GM12878 (cell line): ENCODE measurements at regions of chr1 and their contacts with region 1.

Region 1: DNA sequence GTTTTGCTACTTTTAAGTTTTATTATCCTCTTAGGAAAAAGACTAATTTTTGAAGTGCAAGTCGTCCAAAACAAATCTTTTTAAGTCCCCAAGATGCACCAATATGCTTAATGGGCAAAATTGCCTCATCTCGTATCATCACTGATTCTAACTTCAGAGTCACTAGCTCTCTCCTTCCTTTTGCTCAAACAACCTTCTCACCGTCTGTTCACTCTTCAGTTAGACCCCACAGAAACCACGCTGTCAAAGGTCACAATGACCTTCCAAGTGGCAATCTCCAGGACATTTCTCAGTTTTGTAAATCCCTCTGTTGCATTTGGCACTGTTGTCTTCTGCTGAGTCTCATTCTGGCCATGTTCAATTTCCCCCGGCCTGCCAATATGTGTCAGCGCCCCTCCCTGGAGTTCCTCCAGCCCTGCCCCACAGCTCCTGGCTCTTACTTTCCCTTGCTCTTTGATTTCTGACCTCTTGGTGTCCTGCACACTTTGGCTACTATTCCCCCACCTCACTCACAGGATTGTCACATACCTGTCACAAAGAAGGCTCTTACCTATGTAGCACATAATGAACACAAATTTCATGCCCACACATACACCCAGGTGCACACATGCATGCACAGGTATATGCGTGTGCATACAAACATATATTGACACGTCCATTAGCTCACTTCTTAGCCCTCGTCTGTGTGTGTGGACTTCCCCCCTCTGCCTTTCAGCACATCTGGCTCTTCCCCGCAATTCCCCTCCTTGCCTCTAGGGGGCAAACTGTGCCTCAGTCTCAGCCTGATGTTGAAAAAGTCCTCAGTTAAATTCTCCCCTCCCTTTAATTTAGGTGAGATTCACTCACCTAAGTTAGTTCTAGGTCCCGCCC is 354.0 kb upstream of the DUSP10 start:
- DNase-seq: peak; percentile 25
- ATAC-seq: peak; percentile 95
- H3K4me3 ChIP-seq: no peak overlapping the region
- H3K27ac ChIP-seq: no peak overlapping the region
- H3K4me1 ChIP-seq: no peaks in the 10 kb centered on the region
- H3K27me3 ChIP-seq: no peaks in the 10 kb centered on the region
- CTCF ChIP-seq: peak; percentile 68 to 98 (median 94)
- EP300 ChIP-seq: no peak
- POLR2A ChIP-seq: no peak
- RAD21 ChIP-seq: peak; percentile 67

Region 2: GRCh38 chr1:222073307-222073995 is 22.4 kb before region 1 on chr1:
- CTCF ChIA-PET with region 1: interaction called, 14 read pairs
- POLR2A ChIA-PET with region 1: no interaction called
- RAD21 ChIA-PET with region 1: interaction called, 3 read pairs
- SMC1A ChIA-PET with region 1: interaction called, 4 read pairs
- in situ Hi-C with region 1: no loop called
- intact Hi-C with region 1: no loop called
- DNase-seq: no peak
- ATAC-seq: no peak
- H3K4me3 ChIP-seq: no peak overlapping the region
- H3K27ac ChIP-seq: no peak overlapping the region
- H3K4me1 ChIP-seq: no peaks in the 10 kb centered on the region
- H3K27me3 ChIP-seq: no peaks in the 10 kb centered on the region
- CTCF ChIP-seq: no peak
- EP300 ChIP-seq: no peak
- POLR2A ChIP-seq: no peak
- RAD21 ChIP-seq: no peak

Region 3: GRCh38 chr1:222081859-222082258 is 14.0 kb before region 1 on chr1:
- CTCF ChIA-PET with region 1: interaction called, 13 read pairs
- POLR2A ChIA-PET with region 1: no interaction called
- RAD21 ChIA-PET with region 1: no interaction called
- SMC1A ChIA-PET with region 1: interaction called, 4 read pairs
- in situ Hi-C with region 1: no loop called
- intact Hi-C with region 1: no loop called
- DNase-seq: no peak
- ATAC-seq: peak; percentile 38
- H3K4me3 ChIP-seq: no peak overlapping the region
- H3K27ac ChIP-seq: no peak overlapping the region
- H3K4me1 ChIP-seq: no peaks in the 10 kb centered on the region
- H3K27me3 ChIP-seq: no peaks in the 10 kb centered on the region
- CTCF ChIP-seq: no peak
- EP300 ChIP-seq: no peak
- POLR2A ChIP-seq: no peak
- RAD21 ChIP-seq: no peak

Region 4: DNA sequence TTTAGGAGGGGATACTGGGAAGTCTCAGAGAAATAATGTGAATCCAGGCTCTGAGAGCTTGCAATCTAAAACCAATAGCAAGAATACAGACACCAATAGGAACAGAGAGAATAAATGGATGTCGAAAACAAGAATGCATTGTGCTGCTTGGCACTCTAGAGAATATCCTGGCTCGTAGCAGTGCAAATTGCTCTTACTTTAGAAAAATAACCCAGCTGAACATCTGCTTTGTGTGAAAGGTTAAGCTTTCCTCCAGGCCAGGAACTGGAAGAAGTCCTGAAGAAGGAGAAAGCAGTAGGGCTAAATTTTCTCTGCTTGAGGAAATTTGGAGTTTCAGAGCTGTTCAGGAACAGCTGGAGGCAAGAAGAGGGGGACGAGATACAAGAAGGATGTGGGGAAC is 69.8 kb after region 1 on chr1:
- CTCF ChIA-PET with region 1: interaction called, 17 read pairs
- POLR2A ChIA-PET with region 1: no interaction called
- RAD21 ChIA-PET with region 1: interaction called, 5 read pairs
- SMC1A ChIA-PET with region 1: interaction called, 4 read pairs
- in situ Hi-C with region 1: no loop called
- intact Hi-C with region 1: no loop called
- DNase-seq: no peak
- ATAC-seq: no peak
- H3K4me3 ChIP-seq: no peak overlapping the region
- H3K27ac ChIP-seq: no peak overlapping the region
- H3K4me1 ChIP-seq: no peaks in the 10 kb centered on the region
- H3K27me3 ChIP-seq: no peaks in the 10 kb centered on the region
- CTCF ChIP-seq: no peak
- EP300 ChIP-seq: no peak
- POLR2A ChIP-seq: no peak
- RAD21 ChIP-seq: no peak